CD4-positive, alpha-beta T cell (primary cell): ENCODE measurements at regions of chr9 and their contacts with region 1.

Region 1: DNA sequence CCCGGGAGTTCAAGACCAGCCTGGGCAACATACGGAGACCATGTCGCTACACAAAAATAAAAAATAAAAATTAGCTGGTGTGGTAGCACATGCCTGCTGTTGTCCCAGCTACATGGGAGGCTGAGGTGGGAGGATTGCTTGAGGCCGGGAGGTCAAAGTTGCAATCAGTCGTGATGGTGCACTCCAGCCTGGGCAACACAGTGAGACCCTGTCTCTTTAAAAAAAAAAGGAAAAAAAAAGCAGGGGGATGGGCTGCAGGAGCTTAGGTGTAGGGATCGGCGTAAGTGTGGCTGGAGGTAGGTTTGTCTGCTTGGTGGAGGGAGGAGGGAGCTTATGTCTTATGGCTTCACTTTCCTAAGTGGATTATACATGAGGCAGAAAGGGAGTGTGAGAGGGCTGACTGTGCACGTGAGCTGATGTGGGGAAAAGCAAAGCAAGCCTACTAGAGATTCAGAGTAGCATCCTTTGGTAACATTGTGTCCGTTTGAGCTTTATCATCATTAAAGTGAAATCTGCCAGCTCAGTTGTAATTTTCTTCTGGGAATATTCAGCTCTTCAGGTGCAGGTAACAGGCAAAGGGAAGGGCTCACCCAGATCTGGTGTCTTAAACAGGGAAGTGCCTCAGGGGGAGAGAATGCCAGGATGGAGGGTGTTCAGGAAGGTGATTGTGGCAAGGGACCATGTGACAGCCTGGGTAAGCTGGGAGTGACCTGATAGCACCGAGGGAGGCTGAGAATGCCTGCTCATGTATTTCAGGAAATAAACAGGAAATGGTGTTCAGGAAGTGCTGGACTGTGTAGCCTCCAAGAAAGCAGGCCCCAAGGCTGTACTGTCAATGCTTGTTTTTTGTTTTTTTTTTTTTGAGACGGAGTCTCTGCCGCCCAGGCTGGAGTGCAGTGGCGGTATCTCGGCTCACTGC is 17.6 kb upstream of the SETX start:
- DNase-seq: peak in 3 of 14 experiments; percentile 18 to 50 (median 47)
- ATAC-seq: no peak
- H3K4me3 ChIP-seq: no peak overlapping the region
- H3K4me3 Mint-ChIP-seq: no peak overlapping the region
- H3K27ac ChIP-seq: peak overlapping the region in 1 of 2 donors; percentile 28
- H3K27ac Mint-ChIP-seq: peak overlapping the region; percentile 42
- H3K4me1 ChIP-seq: peaks cover 12% of the 10 kb centered on the region
- H3K4me1 Mint-ChIP-seq: peaks cover 16% of the 10 kb centered on the region
- H3K27me3 ChIP-seq: no peaks in the 10 kb centered on the region
- H3K27me3 Mint-ChIP-seq: no peaks in the 10 kb centered on the region
- CTCF ChIP-seq: no peak

Region 2: DNA sequence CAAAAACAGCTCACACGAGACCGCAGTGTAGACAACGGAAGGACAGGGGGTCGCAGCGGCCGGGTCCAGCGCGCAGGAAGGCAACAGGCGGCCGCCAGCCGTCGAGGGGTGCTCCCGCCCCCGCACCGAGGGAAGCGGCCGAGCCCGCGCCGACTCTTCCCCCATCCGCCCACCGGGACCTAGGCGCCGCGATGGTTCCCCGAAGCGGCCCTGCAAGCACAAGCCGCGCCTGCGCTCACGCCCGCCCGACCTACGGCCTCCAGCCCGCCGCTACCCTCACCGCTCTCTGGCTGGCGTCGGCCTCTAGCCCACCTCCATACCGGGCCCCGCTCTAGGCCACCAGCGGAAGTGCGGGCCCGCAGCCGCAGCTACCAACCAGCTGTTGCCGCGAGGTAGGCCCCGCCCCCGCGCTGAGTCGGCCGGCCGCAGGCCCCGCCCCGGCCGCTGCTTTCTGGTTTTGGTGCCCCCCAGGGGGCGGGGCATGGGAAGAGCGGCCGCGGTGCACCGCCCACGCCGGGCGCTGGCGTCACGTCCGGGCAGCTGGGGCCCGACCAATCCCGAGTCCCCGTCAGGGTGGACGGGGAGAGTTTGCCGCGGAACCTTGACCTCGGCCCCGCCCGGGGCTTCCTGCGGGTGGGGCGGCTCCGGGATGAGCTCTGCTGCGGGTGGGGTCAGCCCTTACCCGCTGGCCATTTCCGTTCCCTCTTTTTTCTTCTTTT is 17.6 kb before region 1 on chr9 and contains the start of gene SETX:
- CTCF ChIA-PET with region 1: interaction called, 3 read pairs
- POLR2A ChIA-PET with region 1: interaction called, 11 read pairs
- intact Hi-C with region 1: no loop called
- DNase-seq: peak; percentile 88 to 99 (median 96)
- ATAC-seq: peak; percentile 82
- H3K4me3 ChIP-seq: peak within 1 kb of the TSS; percentile 74
- H3K4me3 Mint-ChIP-seq: peak within 1 kb of the TSS; percentile 94
- H3K27ac ChIP-seq: peak within 1 kb of the TSS; percentile 91 to 96
- H3K27ac Mint-ChIP-seq: peak within 1 kb of the TSS; percentile 91
- H3K4me1 ChIP-seq: peaks cover 41% of the 10 kb centered on the region
- H3K4me1 Mint-ChIP-seq: peaks cover 47% of the 10 kb centered on the region
- H3K27me3 ChIP-seq: no peaks in the 10 kb centered on the region
- H3K27me3 Mint-ChIP-seq: no peaks in the 10 kb centered on the region
- CTCF ChIP-seq: no peak
- total RNA-seq, gene SETX: 36.1 to 37.7 TPM